RWPE1 (cell line): ENCODE measurements at regions of chr10 and their contacts with region 1.

Region 1: GRCh38 chr10:69004821-69005220 is 16.2 kb downstream of the KIFBP start:
- DNase-seq: peak; percentile 34
- H3K27ac ChIP-seq: no peak overlapping the region
- CTCF ChIP-seq: peak; percentile 42

Region 2: DNA sequence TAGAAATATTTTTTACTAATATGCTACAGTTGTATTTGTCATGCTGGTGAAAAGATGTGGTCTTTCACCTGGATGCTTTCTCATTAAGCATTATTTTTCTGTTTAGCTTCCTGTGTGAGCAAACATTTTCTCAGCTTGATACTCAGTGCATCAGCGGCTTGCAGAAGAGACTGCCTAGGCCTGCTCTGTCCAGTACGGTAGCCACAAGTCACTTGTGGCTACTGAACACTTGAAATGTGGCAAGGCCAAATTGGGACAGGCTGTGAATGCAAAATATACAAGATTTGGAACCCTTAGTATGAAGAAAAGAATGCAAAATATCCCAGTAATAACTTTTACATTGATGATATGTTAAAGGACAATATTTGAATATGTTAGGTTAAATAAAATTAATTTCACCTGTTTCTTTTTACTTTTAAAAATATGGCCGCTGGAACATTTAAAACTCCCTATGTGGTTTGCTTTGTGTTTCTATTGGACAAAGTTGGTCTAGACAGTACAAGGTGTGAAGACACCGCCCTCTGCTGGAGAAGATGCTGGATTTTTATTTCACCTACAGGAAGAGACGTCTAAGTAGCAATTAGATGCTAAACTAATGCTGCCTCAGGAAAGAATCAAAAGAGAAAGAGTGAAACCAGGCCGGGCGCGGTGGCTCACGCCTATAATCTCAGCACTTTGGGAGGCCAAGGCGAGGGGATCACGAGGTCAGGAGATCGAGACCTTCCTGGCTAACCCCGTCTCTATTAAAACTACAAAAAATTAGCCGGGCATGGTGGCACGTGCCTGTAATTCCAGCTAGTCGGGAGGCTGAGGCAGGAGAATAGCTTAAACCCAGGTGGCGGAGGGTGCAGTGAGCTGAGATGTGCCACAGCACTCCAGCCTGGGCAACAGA is 88.4 kb after region 1 on chr10:
- CTCF ChIA-PET with region 1: interaction called, 44 read pairs
- POLR2A ChIA-PET with region 1: no interaction called
- DNase-seq: peak; percentile 78
- H3K27ac ChIP-seq: no peak overlapping the region
- CTCF ChIP-seq: peak; percentile 83